T-cell (primary cell): ENCODE measurements at regions of chr18 and their contacts with region 1.

Region 1: GRCh38 chr18:32509111-32509510 is 38.4 kb upstream of the GAREM1 start:
- DNase-seq: no peak
- ATAC-seq: no peak
- H3K4me3 ChIP-seq: no peak overlapping the region
- H3K4me3 Mint-ChIP-seq: no peak overlapping the region
- H3K27ac ChIP-seq: no peak overlapping the region
- H3K27ac Mint-ChIP-seq: no peak overlapping the region
- H3K4me1 ChIP-seq: no peaks in the 10 kb centered on the region
- H3K4me1 Mint-ChIP-seq: no peaks in the 10 kb centered on the region
- H3K27me3 ChIP-seq: peaks cover 0 to 2% of the 10 kb centered on the region in 2 experiments
- H3K27me3 Mint-ChIP-seq: peaks cover 4 to 16% of the 10 kb centered on the region in 2 donors

Region 2: GRCh38 chr18:32310101-32310500 is 199.0 kb before region 1 on chr18:
- CTCF ChIA-PET with region 1: interaction called in 1 of 2 experiments, 16 read pairs
- POLR2A ChIA-PET with region 1: no interaction called
- DNase-seq: no peak
- ATAC-seq: no peak
- H3K4me3 ChIP-seq: no peak overlapping the region
- H3K4me3 Mint-ChIP-seq: no peak overlapping the region
- H3K27ac ChIP-seq: no peak overlapping the region
- H3K27ac Mint-ChIP-seq: no peak overlapping the region
- H3K4me1 ChIP-seq: no peaks in the 10 kb centered on the region
- H3K4me1 Mint-ChIP-seq: no peaks in the 10 kb centered on the region
- H3K27me3 ChIP-seq: no peaks in the 10 kb centered on the region
- H3K27me3 Mint-ChIP-seq: peaks cover 3 to 12% of the 10 kb centered on the region in 2 donors

Region 3: GRCh38 chr18:32494111-32494510 is 15.0 kb before region 1 on chr18:
- CTCF ChIA-PET with region 1: no interaction called
- POLR2A ChIA-PET with region 1: no interaction called
- DNase-seq: no peak
- ATAC-seq: no peak
- H3K4me3 ChIP-seq: no peak overlapping the region
- H3K4me3 Mint-ChIP-seq: no peak overlapping the region
- H3K27ac ChIP-seq: no peak overlapping the region
- H3K27ac Mint-ChIP-seq: no peak overlapping the region
- H3K4me1 ChIP-seq: no peaks in the 10 kb centered on the region
- H3K4me1 Mint-ChIP-seq: no peaks in the 10 kb centered on the region
- H3K27me3 ChIP-seq: no peaks in the 10 kb centered on the region
- H3K27me3 Mint-ChIP-seq: peaks cover 7 to 10% of the 10 kb centered on the region in 2 donors